ENCODE measurements at regions of chr15 and their contacts with region 1.

Region 1: GRCh38 chr15:51776952-51777574 is 25.7 kb downstream of the TMOD2 start:
- DNase-seq: peak; percentile 43
- ATAC-seq: peak; percentile 98
- H3K4me3 ChIP-seq: no peak overlapping the region
- H3K27ac ChIP-seq: no peak overlapping the region
- H3K4me1 ChIP-seq: no peaks in the 10 kb centered on the region
- H3K27me3 ChIP-seq: no peaks in the 10 kb centered on the region
- CTCF ChIP-seq: peak; percentile 74 to 77 (median 75)
- EP300 ChIP-seq: no peak
- POLR2A ChIP-seq: no peak
- RAD21 ChIP-seq: peak; percentile 74

Region 2: DNA sequence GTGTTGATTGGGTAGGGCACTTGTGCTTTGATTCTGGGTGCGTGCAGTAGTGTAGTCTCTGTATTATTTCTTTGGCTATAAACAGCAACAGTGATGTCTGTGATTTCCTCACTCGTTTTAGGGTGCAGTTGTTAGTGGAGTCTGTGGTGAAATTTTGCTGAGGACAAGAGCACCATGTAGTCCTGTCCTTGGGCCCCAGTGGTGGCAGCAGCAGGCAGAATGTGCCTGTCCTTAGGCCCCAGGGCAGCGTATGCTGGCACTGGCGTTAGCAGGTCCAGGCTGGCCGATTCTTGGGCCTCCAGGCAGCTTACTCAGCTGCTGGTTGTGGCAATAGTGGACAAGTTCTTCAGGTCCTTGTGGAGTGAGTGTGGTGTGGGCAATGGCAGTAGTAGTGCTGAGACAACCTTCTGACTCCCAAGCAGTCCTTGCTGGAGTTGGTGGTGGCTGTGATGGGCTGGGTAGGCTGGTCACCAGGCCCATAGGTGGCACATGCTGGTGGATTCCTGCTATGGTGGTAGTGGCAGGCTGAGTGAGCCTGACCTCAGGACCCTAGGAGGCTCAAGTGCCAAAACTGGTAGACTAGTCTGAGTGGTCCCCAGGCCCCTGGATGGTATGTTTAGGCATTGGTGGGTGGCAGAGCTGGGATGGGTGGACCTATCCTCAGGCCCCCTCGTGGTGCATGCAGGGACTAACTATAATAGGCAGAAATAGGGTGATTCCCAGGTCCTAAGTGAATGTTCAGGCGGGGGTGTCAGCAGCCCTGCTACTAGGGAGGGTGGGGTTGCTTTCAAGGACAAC is 738.7 kb before region 1 on chr15:
- CTCF ChIA-PET with region 1: no interaction called
- POLR2A ChIA-PET with region 1: no interaction called
- RAD21 ChIA-PET with region 1: no interaction called
- SMC1A ChIA-PET with region 1: no interaction called
- in situ Hi-C with region 1: no loop called
- intact Hi-C with region 1: no loop called
- DNase-seq: no peak
- ATAC-seq: no peak; the same call in 2 of the 3 replicates
- H3K4me3 ChIP-seq: no peak overlapping the region
- H3K27ac ChIP-seq: no peak overlapping the region
- H3K4me1 ChIP-seq: no peaks in the 10 kb centered on the region
- H3K27me3 ChIP-seq: no peaks in the 10 kb centered on the region
- CTCF ChIP-seq: 0 out of 6 replicates have a peak, but pooled peaks of 1 of the 3 experiments have one; percentile 4
- EP300 ChIP-seq: no peak
- POLR2A ChIP-seq: no peak
- RAD21 ChIP-seq: no peak

Region 3: GRCh38 chr15:51536965-51537574 is 240.0 kb before region 1 on chr15:
- CTCF ChIA-PET with region 1: interaction called, 37 read pairs
- POLR2A ChIA-PET with region 1: no interaction called
- RAD21 ChIA-PET with region 1: interaction called, 5 read pairs
- SMC1A ChIA-PET with region 1: interaction called, 12 read pairs
- in situ Hi-C with region 1: no loop called
- intact Hi-C with region 1: loop called (anchors 5 kb)
- DNase-seq: no peak
- ATAC-seq: peak; percentile 53; the same call in 1 of the 3 replicates
- H3K4me3 ChIP-seq: no peak overlapping the region
- H3K27ac ChIP-seq: no peak overlapping the region
- H3K4me1 ChIP-seq: no peaks in the 10 kb centered on the region
- H3K27me3 ChIP-seq: no peaks in the 10 kb centered on the region
- CTCF ChIP-seq: peak; percentile 50 to 69 (median 56)
- EP300 ChIP-seq: no peak
- POLR2A ChIP-seq: no peak
- RAD21 ChIP-seq: peak; percentile 43

Region 4: DNA sequence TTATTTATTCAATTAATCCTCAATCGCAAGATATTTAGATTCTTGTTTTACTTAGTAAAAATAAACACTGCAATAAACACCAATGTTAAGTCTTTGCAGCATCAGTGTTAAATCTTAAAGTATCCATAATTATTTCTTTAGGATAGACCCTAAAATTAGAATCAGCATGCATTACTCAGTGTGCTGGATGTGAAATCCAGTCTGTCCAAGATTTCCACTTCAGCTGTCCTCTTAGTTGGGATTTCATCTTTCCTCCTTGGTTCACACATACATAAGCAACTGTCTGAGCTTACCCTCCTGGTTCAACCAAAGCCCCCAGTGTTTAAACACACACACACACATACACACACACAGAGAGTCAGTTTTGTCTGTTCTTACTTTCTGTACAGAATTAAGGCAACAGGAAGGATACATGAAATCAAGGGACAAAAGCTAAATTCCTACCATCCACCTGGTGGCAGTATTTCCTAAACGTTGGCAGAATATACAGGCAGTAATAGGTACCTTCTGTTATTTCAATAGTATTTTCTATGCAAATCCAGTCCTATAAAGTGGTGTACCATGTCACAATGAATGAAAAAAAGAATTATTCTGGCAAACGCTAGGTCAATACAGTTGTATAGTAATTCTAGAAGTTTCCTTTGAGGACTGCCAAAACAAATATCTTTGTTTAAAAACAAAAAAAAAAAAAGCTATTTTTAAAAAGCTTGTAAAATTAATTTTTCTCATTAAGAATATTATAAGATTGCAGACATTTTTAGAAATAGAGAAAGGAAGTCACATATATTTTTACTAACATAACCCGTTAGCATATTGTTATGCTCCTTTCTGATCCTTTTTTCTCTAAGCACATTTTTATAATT is 127.2 kb before region 1 on chr15:
- CTCF ChIA-PET with region 1: interaction called, 314 read pairs
- POLR2A ChIA-PET with region 1: interaction called, 6 read pairs
- RAD21 ChIA-PET with region 1: interaction called, 232 read pairs
- SMC1A ChIA-PET with region 1: interaction called, 170 read pairs
- in situ Hi-C with region 1: no loop called
- intact Hi-C with region 1: loop called (anchors 1 kb)
- DNase-seq: peak; percentile 63
- ATAC-seq: peak; percentile 96
- H3K4me3 ChIP-seq: no peak overlapping the region
- H3K27ac ChIP-seq: no peak overlapping the region
- H3K4me1 ChIP-seq: peaks cover 3% of the 10 kb centered on the region; the same call in 1 of the 2 replicates
- H3K27me3 ChIP-seq: 0 out of 4 replicates have a peak, but pooled peaks cover 0 to 2% of the 10 kb centered on the region in 2 experiments
- CTCF ChIP-seq: peak; percentile 60 to 85 (median 69)
- EP300 ChIP-seq: no peak
- POLR2A ChIP-seq: no peak
- RAD21 ChIP-seq: peak; percentile 99

Region 5: GRCh38 chr15:51688863-51689262 is 88.2 kb before region 1 on chr15:
- CTCF ChIA-PET with region 1: interaction called, 13 read pairs
- POLR2A ChIA-PET with region 1: no interaction called
- RAD21 ChIA-PET with region 1: interaction called, 7 read pairs
- SMC1A ChIA-PET with region 1: interaction called, 18 read pairs
- in situ Hi-C with region 1: no loop called
- intact Hi-C with region 1: no loop called
- DNase-seq: no peak
- ATAC-seq: peak; percentile 65; the same call in 2 of the 3 replicates
- H3K4me3 ChIP-seq: no peak overlapping the region
- H3K27ac ChIP-seq: no peak overlapping the region
- H3K4me1 ChIP-seq: no peaks in the 10 kb centered on the region
- H3K27me3 ChIP-seq: peaks cover 0 to 4% of the 10 kb centered on the region in 2 experiments; a peak in 1 of 4 replicates
- CTCF ChIP-seq: peak; percentile 13 to 23 (median 21); a peak in 2 of 6 replicates
- EP300 ChIP-seq: no peak
- POLR2A ChIP-seq: no peak
- RAD21 ChIP-seq: no peak

Region 6: GRCh38 chr15:51731549-51732267 is 45.4 kb before region 1 on chr15:
- CTCF ChIA-PET with region 1: interaction called, 136 read pairs
- POLR2A ChIA-PET with region 1: interaction called, 5 read pairs
- RAD21 ChIA-PET with region 1: interaction called, 33 read pairs
- SMC1A ChIA-PET with region 1: interaction called, 45 read pairs
- in situ Hi-C with region 1: no loop called
- intact Hi-C with region 1: loop called (anchors 2 kb)
- DNase-seq: peak; percentile 90
- ATAC-seq: peak; percentile 61
- H3K4me3 ChIP-seq: peak overlapping the region; percentile 63
- H3K27ac ChIP-seq: peak overlapping the region; percentile 94
- H3K4me1 ChIP-seq: peaks cover 57% of the 10 kb centered on the region
- H3K27me3 ChIP-seq: no peaks in the 10 kb centered on the region
- CTCF ChIP-seq: no peak
- EP300 ChIP-seq: peak; percentile 49 to 70; a peak in 3 of 4 replicates
- POLR2A ChIP-seq: 0 out of 2 replicates have a peak, but pooled peaks have one; percentile 38
- RAD21 ChIP-seq: no peak; the same call in 1 of the 2 replicates

Region 7: GRCh38 chr15:51799282-51800252 is 22.5 kb after region 1 on chr15:
- CTCF ChIA-PET with region 1: interaction called, 10 read pairs
- POLR2A ChIA-PET with region 1: no interaction called
- RAD21 ChIA-PET with region 1: no interaction called
- SMC1A ChIA-PET with region 1: interaction called, 3 read pairs
- in situ Hi-C with region 1: no loop called
- intact Hi-C with region 1: no loop called
- DNase-seq: no peak
- ATAC-seq: no peak
- H3K4me3 ChIP-seq: no peak overlapping the region
- H3K27ac ChIP-seq: no peak overlapping the region
- H3K4me1 ChIP-seq: no peaks in the 10 kb centered on the region; the same call in 1 of the 2 replicates
- H3K27me3 ChIP-seq: no peaks in the 10 kb centered on the region
- CTCF ChIP-seq: no peak
- EP300 ChIP-seq: no peak
- POLR2A ChIP-seq: no peak
- RAD21 ChIP-seq: no peak

Region 8: DNA sequence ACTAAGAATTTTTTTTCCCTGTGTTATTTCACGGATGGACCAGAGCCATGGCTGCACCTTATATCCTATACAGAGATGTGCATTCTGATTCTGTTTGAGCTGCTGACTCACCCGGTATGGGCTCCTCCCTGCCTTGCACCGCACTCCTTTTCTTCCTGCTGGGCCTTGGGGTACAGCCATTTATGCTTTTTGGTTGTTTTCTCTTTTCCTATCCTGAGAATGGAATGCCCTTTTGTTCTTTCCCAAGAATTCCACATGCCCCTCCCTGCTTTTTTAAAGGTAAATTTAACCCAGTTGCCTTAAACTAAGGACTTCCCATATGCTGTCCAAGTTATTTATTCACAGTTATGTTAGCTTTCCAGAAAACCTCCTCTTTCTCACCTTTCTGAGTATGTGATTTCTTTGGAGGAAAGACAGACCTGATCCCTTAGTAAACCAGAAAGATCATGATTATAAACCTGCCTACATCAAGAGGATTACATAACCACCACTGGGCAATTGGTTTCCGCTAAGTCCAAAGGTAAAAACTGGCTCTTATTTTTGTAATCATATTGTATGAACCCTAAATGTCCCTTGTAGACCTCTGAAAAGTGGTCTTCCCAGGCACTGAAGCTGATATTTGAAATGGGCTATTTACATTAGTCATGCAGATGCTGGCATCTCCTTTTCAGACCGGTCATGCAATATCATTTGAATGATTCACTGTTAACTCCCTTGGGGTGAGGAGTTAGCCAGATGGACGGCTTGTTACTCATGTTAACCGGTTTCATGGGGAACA is 97.9 kb after region 1 on chr15:
- CTCF ChIA-PET with region 1: no interaction called
- POLR2A ChIA-PET with region 1: no interaction called
- RAD21 ChIA-PET with region 1: no interaction called
- SMC1A ChIA-PET with region 1: no interaction called
- in situ Hi-C with region 1: no loop called
- intact Hi-C with region 1: no loop called
- DNase-seq: no peak
- ATAC-seq: no peak
- H3K4me3 ChIP-seq: no peak overlapping the region
- H3K27ac ChIP-seq: no peak overlapping the region
- H3K4me1 ChIP-seq: no peaks in the 10 kb centered on the region
- H3K27me3 ChIP-seq: no peaks in the 10 kb centered on the region
- CTCF ChIP-seq: no peak
- EP300 ChIP-seq: no peak
- POLR2A ChIP-seq: no peak
- RAD21 ChIP-seq: no peak